ENCODE measurements at regions of chr3 and their contacts with region 1.

Region 1: GRCh38 chr3:120417272-120417911 is 33.4 kb downstream of the FSTL1 start:
- DNase-seq: peak; percentile 58 to 83 (median 79)
- ATAC-seq: peak; percentile 100
- H3K4me3 ChIP-seq: peak overlapping the region; percentile 72
- H3K4me3 Mint-ChIP-seq: peak overlapping the region; percentile 80 to 89 (median 88)
- H3K27ac ChIP-seq: no peak overlapping the region
- H3K27ac Mint-ChIP-seq: peak overlapping the region in 8 of 9 donors; percentile 13 to 76 (median 32)
- H3K4me1 ChIP-seq: no peaks in the 10 kb centered on the region
- H3K4me1 Mint-ChIP-seq: peaks cover 16 to 24% (median 18%) of the 10 kb centered on the region in 7 donors
- H3K27me3 ChIP-seq: no peaks in the 10 kb centered on the region
- H3K27me3 Mint-ChIP-seq: peaks cover 0 to 7% (median 6%) of the 10 kb centered on the region in 5 donors

Region 2: DNA sequence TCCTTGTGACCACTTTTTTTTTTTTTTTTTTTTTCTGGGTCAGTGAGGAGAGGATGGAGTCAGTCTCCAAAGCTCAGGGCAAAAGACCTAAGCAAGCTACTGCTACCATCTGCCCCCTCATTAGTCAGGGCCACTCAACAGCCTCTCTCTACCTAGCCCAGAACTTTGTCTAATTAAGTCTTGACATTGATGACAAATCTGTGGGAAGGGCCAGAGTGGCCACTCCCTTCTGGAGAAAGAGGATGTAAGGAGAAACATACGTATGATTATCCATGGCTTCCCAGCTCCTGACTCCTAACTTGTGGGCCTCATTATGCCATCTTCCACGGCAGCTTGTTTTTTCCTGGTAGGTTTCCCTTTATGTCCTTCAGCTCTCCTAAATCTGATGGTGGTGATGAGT is 597.6 kb before region 1 on chr3:
- CTCF ChIA-PET with region 1: no interaction called
- POLR2A ChIA-PET with region 1: no interaction called
- intact Hi-C with region 1: loop called (anchors 1 to 2 kb)
- DNase-seq: no peak
- ATAC-seq: no peak
- H3K4me3 ChIP-seq: no peak overlapping the region
- H3K4me3 Mint-ChIP-seq: no peak overlapping the region
- H3K27ac ChIP-seq: no peak overlapping the region
- H3K27ac Mint-ChIP-seq: no peak overlapping the region
- H3K4me1 ChIP-seq: no peaks in the 10 kb centered on the region
- H3K4me1 Mint-ChIP-seq: peaks cover 0 to 9% (median 4%) of the 10 kb centered on the region in 7 donors
- H3K27me3 ChIP-seq: no peaks in the 10 kb centered on the region
- H3K27me3 Mint-ChIP-seq: no peaks in the 10 kb centered on the region

Region 3: GRCh38 chr3:119891944-119892721 is 525.3 kb before region 1 on chr3:
- CTCF ChIA-PET with region 1: interaction called, 3 read pairs
- POLR2A ChIA-PET with region 1: no interaction called
- intact Hi-C with region 1: loop called in 1 of 2 experiments (anchors 1 kb)
- DNase-seq: peak in 7 of 9 donors; percentile 38 to 68 (median 60)
- ATAC-seq: peak; percentile 78
- H3K4me3 ChIP-seq: no peak overlapping the region
- H3K4me3 Mint-ChIP-seq: peak overlapping the region in 1 of 10 donors; percentile 8
- H3K27ac ChIP-seq: no peak overlapping the region
- H3K27ac Mint-ChIP-seq: peak overlapping the region in 2 of 9 donors; percentile 28 to 39
- H3K4me1 ChIP-seq: no peaks in the 10 kb centered on the region
- H3K4me1 Mint-ChIP-seq: peaks cover 2 to 19% (median 11%) of the 10 kb centered on the region in 7 donors
- H3K27me3 ChIP-seq: no peaks in the 10 kb centered on the region
- H3K27me3 Mint-ChIP-seq: no peaks in the 10 kb centered on the region

Region 4: DNA sequence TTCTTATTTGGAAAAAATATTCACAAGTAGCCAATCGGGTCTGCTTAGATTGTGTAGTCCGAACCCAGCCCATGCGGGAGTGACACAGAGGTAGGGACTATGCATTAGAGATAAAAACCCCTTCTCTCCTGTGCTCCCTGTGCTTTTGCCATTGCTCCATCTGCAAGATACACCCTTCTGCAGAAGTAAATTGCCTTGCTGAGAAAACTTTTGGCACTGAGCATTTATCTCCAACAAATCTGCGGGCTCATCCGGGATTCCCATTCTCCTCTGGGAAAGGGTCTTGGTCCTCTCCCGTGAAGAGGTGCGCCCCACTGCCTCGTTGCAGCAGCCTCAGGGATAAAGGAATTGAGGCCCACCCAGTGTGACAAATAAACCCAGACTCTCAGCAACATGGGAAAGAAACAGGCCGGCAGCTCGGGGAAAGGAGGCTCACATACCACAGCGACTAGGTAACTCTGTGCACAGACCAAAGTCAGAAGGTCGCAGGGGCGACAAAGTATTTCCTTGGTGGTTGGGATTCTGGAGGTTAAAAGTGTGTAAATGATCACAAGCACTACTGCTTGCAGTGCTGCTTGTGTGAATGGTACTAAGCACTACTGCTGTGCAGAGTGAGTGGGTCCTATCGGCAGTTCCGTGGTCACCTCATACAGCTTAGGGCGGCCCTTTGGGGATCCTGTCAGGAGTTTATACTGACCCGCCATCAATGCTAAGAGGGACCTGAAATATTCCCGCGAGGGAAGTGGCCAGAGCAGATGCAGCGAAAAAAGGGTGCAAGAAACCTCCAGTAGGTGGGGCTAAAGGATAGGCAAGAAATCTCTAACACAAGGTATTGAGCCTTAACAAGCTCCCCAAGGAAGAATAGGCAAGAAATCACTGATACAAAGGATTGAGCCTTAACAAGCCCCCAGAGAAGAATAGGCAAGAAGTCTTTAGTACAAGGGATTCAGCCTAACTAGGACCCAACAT is 377.5 kb before region 1 on chr3:
- CTCF ChIA-PET with region 1: no interaction called
- POLR2A ChIA-PET with region 1: no interaction called
- intact Hi-C with region 1: loop called in 1 of 2 experiments (anchors 1 kb)
- DNase-seq: no peak
- ATAC-seq: no peak
- H3K4me3 ChIP-seq: no peak overlapping the region
- H3K4me3 Mint-ChIP-seq: peak overlapping the region in 2 of 10 donors; percentile 30 to 52
- H3K27ac ChIP-seq: no peak overlapping the region
- H3K27ac Mint-ChIP-seq: peak overlapping the region in 2 of 9 donors; percentile 20 to 33
- H3K4me1 ChIP-seq: no peaks in the 10 kb centered on the region
- H3K4me1 Mint-ChIP-seq: peaks cover 4 to 65% (median 22%) of the 10 kb centered on the region in 7 donors
- H3K27me3 ChIP-seq: no peaks in the 10 kb centered on the region
- H3K27me3 Mint-ChIP-seq: no peaks in the 10 kb centered on the region

Region 5: GRCh38 chr3:120147072-120147871 is 270.1 kb before region 1 on chr3:
- CTCF ChIA-PET with region 1: no interaction called
- POLR2A ChIA-PET with region 1: no interaction called
- intact Hi-C with region 1: loop called in 1 of 2 experiments (anchors 5 kb)
- DNase-seq: peak in 7 of 9 donors; percentile 48 to 78 (median 65)
- ATAC-seq: peak; percentile 91
- H3K4me3 ChIP-seq: no peak overlapping the region
- H3K4me3 Mint-ChIP-seq: no peak overlapping the region
- H3K27ac ChIP-seq: no peak overlapping the region
- H3K27ac Mint-ChIP-seq: peak overlapping the region in 6 of 9 donors; percentile 1 to 61 (median 38)
- H3K4me1 ChIP-seq: no peaks in the 10 kb centered on the region
- H3K4me1 Mint-ChIP-seq: peaks cover 9 to 33% (median 22%) of the 10 kb centered on the region in 7 donors
- H3K27me3 ChIP-seq: no peaks in the 10 kb centered on the region
- H3K27me3 Mint-ChIP-seq: peaks cover 0 to 3% (median 0%) of the 10 kb centered on the region in 5 donors

Region 6: GRCh38 chr3:120245386-120245785 is 172.0 kb before region 1 on chr3:
- CTCF ChIA-PET with region 1: interaction called, 69 read pairs
- POLR2A ChIA-PET with region 1: no interaction called
- intact Hi-C with region 1: loop called (anchors 1 kb)
- DNase-seq: no peak
- ATAC-seq: no peak
- H3K4me3 ChIP-seq: no peak overlapping the region
- H3K4me3 Mint-ChIP-seq: no peak overlapping the region
- H3K27ac ChIP-seq: no peak overlapping the region
- H3K27ac Mint-ChIP-seq: no peak overlapping the region
- H3K4me1 ChIP-seq: no peaks in the 10 kb centered on the region
- H3K4me1 Mint-ChIP-seq: no peaks in the 10 kb centered on the region
- H3K27me3 ChIP-seq: no peaks in the 10 kb centered on the region
- H3K27me3 Mint-ChIP-seq: peaks cover 21 to 38% (median 25%) of the 10 kb centered on the region in 5 donors

Region 7: DNA sequence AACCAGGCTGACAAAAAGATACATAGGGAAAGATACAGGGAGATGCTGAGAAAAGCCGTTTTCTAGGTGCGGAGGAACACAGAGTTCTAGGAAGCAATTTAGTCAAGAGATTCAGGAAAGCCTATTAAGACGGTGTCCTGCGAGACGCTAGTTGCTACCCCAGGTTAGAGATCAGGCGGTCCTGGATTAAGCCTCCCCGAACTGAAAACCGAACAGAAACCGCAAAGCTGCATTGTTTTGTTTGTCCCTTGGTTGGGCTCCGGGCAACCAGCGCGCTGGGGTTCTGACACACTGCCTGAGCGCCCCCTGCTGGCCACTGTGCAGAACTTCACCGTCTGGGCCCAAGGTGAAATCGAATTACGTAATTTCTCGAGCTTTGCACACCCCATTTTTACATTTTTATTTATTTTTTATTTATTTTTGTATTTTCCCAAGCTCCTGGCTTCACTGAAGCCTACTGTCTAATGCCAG is 141.4 kb after region 1 on chr3:
- CTCF ChIA-PET with region 1: interaction called, 12 read pairs
- POLR2A ChIA-PET with region 1: no interaction called
- intact Hi-C with region 1: loop called (anchors 1 kb)
- DNase-seq: peak; percentile 80 to 89 (median 88)
- ATAC-seq: peak; percentile 97
- H3K4me3 ChIP-seq: peak overlapping the region; percentile 61
- H3K4me3 Mint-ChIP-seq: peak overlapping the region; percentile 75 to 87 (median 82)
- H3K27ac ChIP-seq: peak overlapping the region; percentile 58
- H3K27ac Mint-ChIP-seq: peak overlapping the region; percentile 54 to 91 (median 83)
- H3K4me1 ChIP-seq: peaks cover 6% of the 10 kb centered on the region in 2 donors
- H3K4me1 Mint-ChIP-seq: peaks cover 6 to 23% (median 16%) of the 10 kb centered on the region in 7 donors
- H3K27me3 ChIP-seq: peaks cover 0 to 4% of the 10 kb centered on the region in 2 donors
- H3K27me3 Mint-ChIP-seq: peaks cover 0 to 13% (median 7%) of the 10 kb centered on the region in 5 donors